Activated naive CD4-positive, alpha-beta T cell treated with anti-CD3 and anti-CD28 coated beads for 36 hours (primary cell): ENCODE measurements at regions of chr20 and their contacts with region 1.

Region 1: DNA sequence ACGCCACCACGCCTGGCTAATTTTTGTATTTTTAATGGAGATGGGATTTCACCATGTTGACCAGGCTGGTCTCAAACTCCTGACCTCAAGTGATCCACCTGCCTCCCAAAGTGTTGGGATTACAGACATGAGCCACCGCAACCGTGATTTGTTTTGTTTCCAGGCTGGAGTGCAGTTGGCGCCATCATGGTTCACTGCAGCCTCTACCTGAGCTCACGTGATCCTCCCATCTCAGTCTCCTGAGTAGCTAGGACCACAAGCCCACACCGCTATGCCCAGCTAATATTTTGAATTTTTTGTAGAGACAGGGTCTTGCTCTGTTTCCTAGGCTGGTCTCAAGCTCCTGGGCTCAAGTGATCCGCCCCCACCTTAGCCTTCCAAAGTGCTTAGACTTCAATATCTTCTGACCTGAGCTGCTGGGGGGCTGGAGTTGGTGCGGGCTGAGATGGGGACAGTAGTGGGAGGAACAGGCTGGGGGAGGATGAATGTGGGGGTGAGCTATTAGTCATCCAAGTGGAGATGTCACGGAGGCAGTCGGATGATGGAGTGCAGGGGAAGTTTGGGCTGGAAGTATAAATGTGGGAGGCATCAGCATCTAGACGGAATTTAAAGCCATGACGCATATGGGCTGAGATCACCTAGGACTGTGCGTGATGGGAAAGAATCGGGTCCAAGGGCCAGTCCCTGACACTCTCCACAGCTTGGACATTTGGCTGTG is 23.1 kb upstream of the ZMYND8 start:
- DNase-seq: no peak
- H3K4me3 Mint-ChIP-seq: no peak overlapping the region
- H3K27ac Mint-ChIP-seq: no peak overlapping the region
- H3K4me1 Mint-ChIP-seq: peaks cover 18% of the 10 kb centered on the region
- H3K27me3 Mint-ChIP-seq: no peaks in the 10 kb centered on the region

Region 2: GRCh38 chr20:47164140-47164539 is 215.5 kb before region 1 on chr20:
- CTCF ChIA-PET with region 1: no interaction called
- intact Hi-C with region 1: no loop called
- DNase-seq: no peak
- H3K4me3 Mint-ChIP-seq: no peak overlapping the region
- H3K27ac Mint-ChIP-seq: no peak overlapping the region
- H3K4me1 Mint-ChIP-seq: no peaks in the 10 kb centered on the region
- H3K27me3 Mint-ChIP-seq: peaks cover 1% of the 10 kb centered on the region

Region 3: DNA sequence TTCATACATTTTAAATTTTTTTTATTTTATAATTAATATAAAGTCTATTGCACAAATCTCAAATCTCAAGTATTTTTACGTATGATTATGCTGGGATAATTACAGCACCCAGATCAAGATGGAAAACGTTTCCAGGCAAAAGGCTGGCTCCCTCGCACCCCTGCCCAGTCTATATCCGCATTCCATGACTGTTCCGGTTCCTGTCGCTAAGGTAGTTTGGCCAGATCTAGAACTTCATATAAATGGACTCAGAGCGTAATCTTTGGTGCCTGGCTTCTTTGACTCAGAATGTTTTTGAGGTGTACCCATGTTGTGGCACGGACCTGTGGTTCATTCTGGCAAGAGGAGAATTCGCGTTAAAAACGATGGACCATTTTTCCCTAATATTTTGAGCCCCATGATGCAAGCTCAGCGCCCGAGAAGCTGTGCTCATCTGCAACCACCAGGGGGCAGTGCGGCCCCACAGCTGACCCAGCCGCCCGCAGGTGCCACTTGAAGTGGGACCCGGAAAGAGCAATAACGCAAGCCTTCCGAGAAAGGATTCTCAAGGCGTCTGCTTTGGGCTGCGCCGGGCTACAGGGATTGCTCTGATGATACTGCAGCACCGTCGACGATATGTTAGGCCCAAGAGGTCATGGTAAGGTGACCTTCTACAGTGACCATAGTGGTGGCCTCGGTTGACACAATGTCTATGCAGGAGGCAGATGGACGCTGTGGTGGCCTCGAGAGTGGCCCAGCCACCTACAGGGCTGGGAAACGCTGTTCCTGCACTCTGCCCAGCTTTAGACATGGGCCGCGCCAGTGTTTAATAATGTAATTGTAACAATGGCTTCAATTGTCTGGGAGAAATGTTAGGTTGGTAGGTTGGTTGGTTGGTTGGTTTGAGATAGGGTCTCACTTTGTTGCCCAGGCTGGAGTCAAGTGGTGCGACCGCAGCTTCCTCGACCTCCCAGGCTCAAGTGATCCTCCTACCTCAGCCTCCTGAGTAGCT is 183.2 kb before region 1 on chr20:
- CTCF ChIA-PET with region 1: interaction called, 113 read pairs
- intact Hi-C with region 1: loop called (anchors 1 kb)
- DNase-seq: peak; percentile 87
- H3K4me3 Mint-ChIP-seq: no peak overlapping the region
- H3K27ac Mint-ChIP-seq: no peak overlapping the region
- H3K4me1 Mint-ChIP-seq: peaks cover 13% of the 10 kb centered on the region
- H3K27me3 Mint-ChIP-seq: peaks cover 3% of the 10 kb centered on the region

Region 4: DNA sequence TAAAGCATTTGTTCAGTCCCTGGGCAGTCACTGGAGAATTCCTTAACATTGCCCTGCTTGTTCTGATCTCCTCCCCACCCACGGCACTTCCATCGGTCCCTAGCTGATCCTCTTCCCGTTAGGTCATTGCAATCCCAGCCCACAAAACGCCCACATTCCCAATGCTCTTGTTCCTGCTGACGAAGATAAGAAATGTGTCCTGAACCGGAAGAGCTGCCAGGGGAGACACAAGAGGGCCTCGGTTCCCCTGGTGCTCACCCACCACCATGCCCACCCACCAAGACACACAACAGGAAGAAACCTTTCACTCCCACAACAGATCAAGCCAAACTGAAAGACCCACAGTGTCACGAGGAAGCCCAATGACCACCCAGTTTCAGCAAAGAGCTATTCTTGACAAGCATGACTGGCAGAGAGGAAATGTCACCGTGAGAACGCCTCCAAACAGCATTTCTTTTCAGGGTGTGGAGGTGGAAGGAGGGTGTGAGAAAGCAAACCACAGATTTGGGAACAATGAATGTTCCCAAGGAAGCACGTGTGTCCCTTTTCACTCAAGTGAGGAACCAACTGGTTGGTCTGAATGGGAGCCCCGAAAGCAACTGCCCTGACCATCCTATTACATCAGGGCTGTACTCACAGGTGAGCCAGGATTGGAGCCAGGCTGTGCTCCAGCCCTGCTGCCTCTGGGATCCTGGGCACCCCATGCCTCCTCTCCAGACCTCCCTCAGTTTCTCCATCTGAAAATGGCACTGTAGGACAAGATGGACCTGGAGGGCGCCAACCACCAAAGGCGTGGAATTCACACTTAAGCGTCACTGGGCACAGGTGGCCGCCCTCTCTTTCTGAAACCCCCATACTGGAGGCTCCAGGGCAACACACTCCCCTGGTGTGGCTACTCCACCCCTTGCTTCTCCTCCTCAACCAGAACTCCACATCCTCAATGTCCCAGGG is 120.6 kb before region 1 on chr20:
- CTCF ChIA-PET with region 1: interaction called, 14 read pairs
- intact Hi-C with region 1: no loop called
- DNase-seq: no peak
- H3K4me3 Mint-ChIP-seq: no peak overlapping the region
- H3K27ac Mint-ChIP-seq: peak overlapping the region; percentile 39
- H3K4me1 Mint-ChIP-seq: peaks cover 13% of the 10 kb centered on the region
- H3K27me3 Mint-ChIP-seq: no peaks in the 10 kb centered on the region

Region 5: DNA sequence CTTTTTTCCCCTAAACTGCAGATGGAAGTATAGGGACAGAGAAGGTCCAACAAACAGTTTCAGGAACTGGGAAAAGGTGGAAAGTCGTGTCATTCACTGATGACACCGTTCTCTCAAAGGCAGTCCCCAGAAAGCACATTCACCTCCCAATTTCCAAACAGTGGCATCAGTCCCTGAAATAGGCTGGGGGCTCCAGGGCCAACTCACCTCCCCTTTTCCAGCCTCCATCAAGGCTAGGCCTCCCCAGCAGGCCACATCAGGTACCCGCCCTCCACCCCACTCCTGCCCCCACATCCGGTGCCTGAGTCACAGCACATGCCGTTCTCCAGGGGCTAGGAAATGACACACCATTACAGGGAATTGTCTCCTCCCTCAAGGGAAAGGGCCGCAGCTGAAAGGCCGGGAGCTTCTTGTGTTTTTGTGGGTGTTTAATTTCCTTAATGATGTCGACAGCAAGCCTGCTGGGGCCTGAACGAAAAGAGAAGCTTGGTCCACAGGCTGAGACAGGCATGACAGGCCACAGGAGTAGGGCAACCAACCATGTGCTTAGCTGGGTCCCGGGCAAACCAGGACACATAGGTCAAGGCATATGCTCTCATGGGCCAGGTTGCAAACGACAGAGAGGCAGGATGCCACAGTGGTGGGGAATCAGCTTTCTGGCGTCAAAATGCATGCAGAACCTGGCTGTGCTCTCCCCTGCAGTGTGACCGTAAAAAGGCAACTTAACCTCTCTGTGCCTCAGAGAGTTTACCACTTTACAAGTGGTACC is 62.3 kb before region 1 on chr20:
- CTCF ChIA-PET with region 1: interaction called, 14 read pairs
- intact Hi-C with region 1: no loop called
- DNase-seq: peak; percentile 79
- H3K4me3 Mint-ChIP-seq: peak overlapping the region; percentile 22
- H3K27ac Mint-ChIP-seq: peak overlapping the region; percentile 88
- H3K4me1 Mint-ChIP-seq: peaks cover 74% of the 10 kb centered on the region
- H3K27me3 Mint-ChIP-seq: no peaks in the 10 kb centered on the region

Region 6: GRCh38 chr20:47392015-47392720 is 12.6 kb after region 1 on chr20:
- CTCF ChIA-PET with region 1: interaction called, 19 read pairs
- intact Hi-C with region 1: no loop called
- DNase-seq: no peak
- H3K4me3 Mint-ChIP-seq: no peak overlapping the region
- H3K27ac Mint-ChIP-seq: peak overlapping the region; percentile 33
- H3K4me1 Mint-ChIP-seq: peaks cover 18% of the 10 kb centered on the region
- H3K27me3 Mint-ChIP-seq: no peaks in the 10 kb centered on the region

Region 7: GRCh38 chr20:47438577-47439381 is 59.2 kb after region 1 on chr20:
- CTCF ChIA-PET with region 1: no interaction called
- intact Hi-C with region 1: no loop called
- DNase-seq: no peak
- H3K4me3 Mint-ChIP-seq: no peak overlapping the region
- H3K27ac Mint-ChIP-seq: no peak overlapping the region
- H3K4me1 Mint-ChIP-seq: peaks cover 3% of the 10 kb centered on the region
- H3K27me3 Mint-ChIP-seq: no peaks in the 10 kb centered on the region

Region 8: GRCh38 chr20:47544240-47544639 is 164.6 kb after region 1 on chr20:
- CTCF ChIA-PET with region 1: no interaction called
- intact Hi-C with region 1: no loop called
- DNase-seq: no peak
- H3K4me3 Mint-ChIP-seq: no peak overlapping the region
- H3K27ac Mint-ChIP-seq: peak overlapping the region; percentile 46
- H3K4me1 Mint-ChIP-seq: peaks cover 72% of the 10 kb centered on the region
- H3K27me3 Mint-ChIP-seq: no peaks in the 10 kb centered on the region

Region 9: DNA sequence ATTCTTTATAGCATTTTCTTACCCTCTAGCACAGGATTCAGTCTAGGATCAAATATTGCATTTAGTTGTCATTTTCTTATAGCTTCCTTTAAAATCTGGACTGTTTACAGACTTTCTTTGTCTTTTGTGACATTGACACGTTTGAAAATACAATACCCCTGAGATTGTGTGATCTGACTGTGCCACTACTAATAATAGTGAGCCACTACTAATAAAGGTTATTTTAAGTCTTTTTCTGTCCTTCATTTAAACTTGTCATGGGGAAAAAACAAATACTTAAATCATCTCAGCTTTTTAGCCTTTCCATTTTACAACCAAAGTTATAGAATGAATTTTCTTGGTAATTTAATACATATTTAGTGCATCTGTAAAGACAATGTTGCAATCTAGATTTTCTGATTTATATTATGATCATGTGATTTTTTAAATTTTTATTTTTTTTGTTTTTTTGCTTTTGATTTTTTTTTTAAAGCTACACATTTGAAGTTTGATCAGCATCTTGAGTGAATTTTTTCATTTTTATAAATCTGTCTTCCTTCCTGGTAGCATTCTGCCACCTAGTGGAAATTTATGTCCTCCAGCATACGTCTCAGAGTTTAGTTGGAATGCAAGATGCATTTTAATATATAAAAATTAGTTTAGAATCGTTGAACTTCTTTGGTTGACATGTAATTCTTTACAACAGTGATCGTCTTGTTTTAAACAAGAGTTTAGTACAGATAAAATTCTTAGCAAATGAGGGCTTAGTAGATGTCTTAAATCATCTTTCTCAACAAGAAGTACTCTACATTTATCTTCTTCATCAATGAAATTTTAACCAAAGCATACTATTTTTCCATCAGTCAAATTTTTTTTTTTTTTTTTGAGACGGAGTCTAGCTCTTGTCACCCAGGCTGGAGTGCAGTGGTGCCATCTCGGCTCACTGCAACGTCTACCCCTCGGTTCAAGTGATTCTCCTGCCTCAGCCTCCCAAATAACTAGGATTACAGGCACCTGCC is 241.5 kb after region 1 on chr20:
- CTCF ChIA-PET with region 1: interaction called, 28 read pairs
- intact Hi-C with region 1: loop called (anchors 1 kb)
- DNase-seq: peak; percentile 22
- H3K4me3 Mint-ChIP-seq: no peak overlapping the region
- H3K27ac Mint-ChIP-seq: peak overlapping the region; percentile 13
- H3K4me1 Mint-ChIP-seq: peaks cover 33% of the 10 kb centered on the region
- H3K27me3 Mint-ChIP-seq: no peaks in the 10 kb centered on the region

Region 10: DNA sequence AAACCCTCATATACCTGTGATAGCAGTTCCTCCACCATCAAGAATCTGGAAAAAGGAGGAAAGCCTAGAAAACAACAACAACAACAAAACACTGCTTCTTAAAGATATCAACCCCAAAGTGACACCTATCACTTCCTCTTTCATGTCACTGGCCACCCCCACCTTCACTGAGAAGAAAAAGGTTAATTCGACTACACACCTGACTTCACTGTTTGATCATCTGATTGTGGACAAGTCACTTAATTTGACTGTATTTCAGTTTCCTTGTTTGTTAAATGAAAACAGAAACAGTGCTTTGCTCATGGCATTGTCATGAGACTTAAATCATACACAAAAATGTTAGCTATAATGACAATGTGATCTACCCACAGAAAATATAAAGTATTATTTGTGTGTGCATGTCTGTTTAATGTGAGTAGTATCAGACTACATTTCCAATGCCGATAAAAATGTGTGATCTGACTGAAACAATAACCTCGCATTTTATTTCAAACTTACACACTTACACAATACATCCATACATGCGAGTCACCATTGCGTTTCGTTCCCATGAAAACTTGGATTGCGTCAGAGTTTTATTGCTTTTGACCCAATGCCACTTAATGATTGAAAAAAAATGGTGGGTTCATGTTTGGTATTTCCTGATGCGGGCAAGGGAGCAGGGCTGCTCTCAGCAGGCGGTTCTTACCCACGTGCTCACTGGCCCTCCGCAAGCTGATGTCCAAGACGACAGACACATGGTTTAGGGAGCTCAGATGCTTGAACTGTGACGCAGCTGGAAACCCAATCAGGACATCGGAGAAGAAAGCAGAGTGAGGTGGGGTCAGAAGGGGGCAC is 686.5 kb after region 1 on chr20:
- CTCF ChIA-PET with region 1: no interaction called
- intact Hi-C with region 1: no loop called
- DNase-seq: no peak
- H3K4me3 Mint-ChIP-seq: no peak overlapping the region
- H3K27ac Mint-ChIP-seq: no peak overlapping the region
- H3K4me1 Mint-ChIP-seq: no peaks in the 10 kb centered on the region
- H3K27me3 Mint-ChIP-seq: no peaks in the 10 kb centered on the region